RWPE1 (cell line): ENCODE measurements at regions of chr1 and their contacts with region 1.

Region 1: DNA sequence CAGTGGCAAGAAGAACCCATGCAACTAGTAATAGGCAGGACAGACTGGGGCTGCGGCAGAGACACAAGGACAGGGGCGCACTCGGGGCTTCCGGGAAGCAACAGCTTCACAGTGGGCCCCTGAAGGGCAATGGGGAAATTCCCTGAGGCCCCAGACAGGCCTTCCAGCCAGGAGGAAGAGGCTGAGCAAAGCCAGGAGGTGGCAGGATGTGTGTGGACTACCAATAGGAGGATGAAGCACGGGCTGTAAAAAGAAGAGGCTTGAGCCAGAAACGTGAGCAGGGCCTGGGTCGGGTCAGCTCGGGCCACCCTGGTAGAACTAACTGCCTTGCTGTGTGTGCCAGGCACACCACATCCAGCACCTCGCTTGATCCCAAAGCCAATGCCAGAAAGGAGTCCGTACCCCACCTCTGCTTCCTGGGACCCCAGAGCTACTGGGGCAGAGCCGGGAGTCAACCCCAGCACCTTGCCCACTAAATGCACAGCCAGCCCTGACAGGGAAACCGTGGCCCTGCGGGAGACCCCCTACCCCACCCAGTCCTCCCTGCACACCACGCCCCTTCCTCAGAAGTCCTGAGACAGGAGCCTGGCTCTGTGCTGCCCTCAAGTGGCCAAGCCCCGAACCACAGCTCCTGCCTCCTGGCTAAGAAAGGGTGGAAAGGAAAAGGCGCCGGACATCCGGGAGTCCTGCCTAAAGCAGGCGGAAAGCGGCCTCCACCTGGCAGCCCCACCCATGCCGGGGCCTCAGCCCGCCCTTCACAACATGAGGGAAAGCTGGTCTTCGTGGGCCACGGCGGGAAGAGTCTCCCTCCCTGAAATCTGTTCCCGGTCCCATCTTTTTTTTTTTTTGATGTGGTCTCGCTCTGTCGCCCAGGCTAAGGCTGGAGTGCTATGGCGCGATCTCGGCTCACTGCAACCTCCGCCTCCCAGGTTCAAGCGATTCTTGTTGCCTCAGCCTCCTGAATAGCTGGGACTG is 33.7 kb downstream of the TTC39A start:
- DNase-seq: peak; percentile 78
- H3K27ac ChIP-seq: peak overlapping the region; percentile 25; the same call in 1 of the 2 replicates
- CTCF ChIP-seq: peak; percentile 93

Region 2: DNA sequence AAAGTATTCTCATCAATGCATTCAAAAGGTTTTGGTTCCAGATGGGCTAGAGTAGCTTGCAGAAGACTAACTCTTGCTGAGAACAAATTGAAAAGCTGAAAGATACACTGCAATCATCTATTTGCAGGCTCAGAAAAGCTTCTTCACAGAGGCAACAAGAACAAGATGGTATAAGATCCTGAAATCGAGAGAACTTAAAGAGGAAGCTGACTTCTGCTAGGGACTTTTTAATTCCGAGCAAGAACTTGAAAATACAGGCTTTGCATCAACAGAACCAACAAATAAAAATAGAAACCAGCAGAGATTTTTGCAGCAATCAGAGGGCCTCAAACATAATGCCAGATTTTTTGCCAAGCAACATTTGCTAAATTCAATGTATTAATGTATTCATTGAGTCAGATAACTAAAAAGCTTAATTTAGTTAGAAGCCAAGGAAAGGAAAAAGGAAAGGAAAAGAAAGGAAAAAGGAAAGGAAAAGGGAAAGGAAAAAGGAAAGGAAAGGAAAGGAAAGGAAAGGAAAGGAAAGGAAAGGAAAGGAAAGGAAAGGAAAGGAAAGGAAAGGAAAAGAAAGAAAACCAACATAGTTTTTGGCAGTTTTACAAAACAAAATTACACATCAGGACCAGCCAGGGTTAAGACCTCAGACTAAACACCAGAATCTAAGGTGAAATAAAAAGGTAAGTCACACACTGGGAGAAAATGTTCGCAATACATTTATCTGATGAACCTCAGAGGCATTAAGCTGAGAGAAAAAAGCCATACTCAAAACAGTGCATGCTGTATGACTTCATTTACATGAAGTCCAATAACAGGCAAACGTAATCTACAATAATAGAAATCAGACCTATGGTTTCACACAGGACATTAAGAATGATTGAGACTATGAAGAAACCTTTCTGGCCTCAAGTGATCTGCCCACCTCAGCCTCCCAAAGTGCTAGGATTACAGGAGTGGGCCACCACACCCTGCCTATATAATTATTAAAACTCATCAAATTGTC is 379.2 kb before region 1 on chr1:
- CTCF ChIA-PET with region 1: no interaction called
- POLR2A ChIA-PET with region 1: no interaction called
- DNase-seq: no peak
- H3K27ac ChIP-seq: no peak overlapping the region
- CTCF ChIP-seq: no peak

Region 3: DNA sequence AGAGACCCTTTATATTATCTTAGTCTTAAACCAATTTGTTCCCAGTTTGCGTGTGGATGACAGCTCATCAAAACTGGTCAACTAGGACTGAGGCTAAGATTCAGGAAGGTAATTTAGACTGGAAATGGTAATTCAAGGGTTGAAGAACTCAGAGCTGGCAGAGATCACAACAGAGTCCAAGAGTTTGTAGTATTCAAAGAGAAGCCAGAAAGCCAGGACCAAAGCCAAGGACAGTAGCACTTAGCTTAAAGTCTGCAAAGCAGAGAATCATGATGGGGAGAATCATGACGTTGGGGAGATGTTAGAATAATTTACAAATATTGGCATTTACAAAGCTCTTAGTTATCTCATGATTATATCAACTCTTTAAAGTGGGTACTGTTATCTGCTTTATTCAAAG is 28.0 kb before region 1 on chr1:
- CTCF ChIA-PET with region 1: interaction called, 10 read pairs
- POLR2A ChIA-PET with region 1: no interaction called
- DNase-seq: no peak
- H3K27ac ChIP-seq: no peak overlapping the region
- CTCF ChIP-seq: no peak

Region 4: DNA sequence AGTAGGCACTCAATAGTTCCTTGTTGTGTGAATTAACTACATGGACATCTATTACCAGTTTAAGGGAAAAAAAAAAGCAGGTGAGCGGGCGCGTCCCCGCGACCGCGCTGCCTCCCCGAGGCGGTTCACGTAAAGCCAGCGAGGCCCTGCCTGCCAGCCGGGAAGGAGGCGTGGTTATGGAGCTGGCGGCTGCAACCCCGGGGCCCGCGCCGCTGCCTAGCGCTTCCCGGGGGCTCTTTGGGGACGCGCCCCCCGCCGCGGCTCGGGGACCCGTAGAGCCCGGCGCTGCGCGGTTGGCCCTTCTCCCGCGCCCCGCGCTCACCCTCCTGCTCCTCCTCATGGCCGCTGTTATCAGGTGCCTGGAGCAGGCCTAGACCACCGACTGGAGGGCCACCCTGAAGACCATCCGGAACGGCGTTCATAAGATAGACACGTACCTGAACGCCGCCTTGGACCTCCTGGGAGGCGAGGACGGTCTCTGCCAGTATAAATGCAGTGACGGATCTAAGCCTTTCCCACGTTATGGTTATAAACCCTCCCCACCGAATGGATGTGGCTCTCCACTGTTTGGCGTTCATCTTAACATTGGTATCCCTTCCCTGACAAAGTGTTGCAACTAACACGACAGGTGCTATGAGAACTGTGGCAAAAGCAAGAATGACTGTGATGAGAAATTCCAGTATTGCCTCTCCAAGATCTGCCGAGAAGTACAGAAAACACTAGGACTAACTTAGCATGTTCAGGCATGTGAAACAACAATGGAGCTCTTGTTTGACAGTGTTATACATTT is 1071.9 kb after region 1 on chr1:
- CTCF ChIA-PET with region 1: interaction called, 11 read pairs
- POLR2A ChIA-PET with region 1: no interaction called
- DNase-seq: peak; percentile 55
- H3K27ac ChIP-seq: peak overlapping the region; percentile 86
- CTCF ChIP-seq: peak; percentile 44